ENCODE measurements at regions of chr17 and their contacts with region 1.

Region 1: DNA sequence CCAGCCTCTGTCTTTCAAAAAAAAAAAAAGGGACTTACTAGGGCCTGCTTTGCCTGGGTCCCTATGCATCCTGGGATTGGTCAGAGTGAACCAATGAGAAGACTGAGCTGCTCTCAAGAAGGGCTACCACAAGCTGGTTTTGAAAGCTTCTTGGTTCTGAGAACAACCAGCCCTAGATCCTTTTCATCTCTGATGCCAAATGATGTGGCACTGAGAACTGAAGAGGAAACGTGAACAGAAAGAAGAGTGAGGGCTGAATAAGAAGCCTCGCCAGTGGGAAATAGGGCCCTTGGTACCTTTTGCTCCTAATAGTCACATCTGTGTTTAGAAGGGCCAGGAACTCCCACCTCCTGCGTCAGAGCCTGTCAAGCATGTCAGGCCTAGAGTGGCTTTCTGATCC is 10.7 kb downstream of the TACO1 start:
- DNase-seq: no peak
- ATAC-seq: no peak
- H3K4me3 ChIP-seq: no peak overlapping the region
- H3K27ac ChIP-seq: no peak overlapping the region
- H3K4me1 ChIP-seq: no peaks in the 10 kb centered on the region
- H3K27me3 ChIP-seq: no peaks in the 10 kb centered on the region
- CTCF ChIP-seq: no peak

Region 2: DNA sequence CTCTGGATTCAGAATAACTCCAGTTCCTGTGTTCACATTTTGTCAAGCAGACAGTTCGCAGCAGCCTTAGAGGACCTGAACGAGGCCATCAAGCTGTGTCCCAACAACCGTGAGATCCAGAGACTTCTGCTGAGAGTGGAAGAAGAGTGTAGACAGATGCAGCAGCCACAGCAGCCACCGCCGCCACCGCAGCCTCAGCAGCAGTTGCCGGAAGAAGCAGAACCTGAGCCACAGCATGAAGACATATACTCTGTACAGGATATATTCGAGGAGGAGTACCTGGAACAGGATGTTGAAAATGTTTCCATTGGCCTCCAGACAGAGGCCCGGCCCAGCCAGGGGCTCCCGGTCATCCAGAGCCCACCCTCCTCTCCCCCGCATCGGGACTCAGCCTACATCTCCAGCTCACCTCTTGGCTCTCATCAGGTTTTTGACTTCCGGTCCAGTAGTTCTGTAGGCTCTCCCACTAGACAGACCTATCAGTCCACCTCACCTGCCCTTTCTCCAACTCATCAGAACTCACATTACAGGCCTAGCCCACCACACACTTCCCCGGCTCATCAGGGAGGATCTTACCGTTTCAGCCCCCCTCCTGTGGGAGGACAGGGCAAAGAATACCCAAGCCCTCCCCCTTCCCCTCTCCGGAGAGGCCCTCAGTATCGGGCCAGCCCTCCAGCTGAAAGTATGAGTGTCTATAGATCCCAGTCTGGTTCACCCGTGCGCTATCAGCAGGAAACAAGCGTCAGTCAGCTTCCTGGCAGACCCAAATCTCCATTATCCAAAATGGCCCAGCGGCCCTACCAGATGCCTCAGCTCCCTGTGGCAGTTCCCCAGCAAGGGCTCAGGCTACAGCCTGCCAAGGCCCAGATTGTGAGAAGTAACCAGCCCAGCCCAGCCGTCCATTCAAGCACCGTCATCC is 191.1 kb before region 1 on chr17:
- intact Hi-C with region 1: loop called in 2 of 3 experiments (anchors 5 kb)
- DNase-seq: peak in 1 of 6 donors; percentile 35
- ATAC-seq: no peak
- H3K4me3 ChIP-seq: no peak overlapping the region
- H3K27ac ChIP-seq: no peak overlapping the region
- H3K4me1 ChIP-seq: no peaks in the 10 kb centered on the region
- H3K27me3 ChIP-seq: no peaks in the 10 kb centered on the region
- CTCF ChIP-seq: no peak